Aorta (tissue), 5 donors: ENCODE measurements at regions of chr10 and their contacts with region 1.

Region 1: GRCh38 chr10:110871298-110872084 is at the start of gene PDCD4:
- DNase-seq: peak; percentile 100
- ATAC-seq: peak; percentile 97
- H3K4me3 ChIP-seq: peak within 1 kb of the TSS; percentile 97 to 98
- H3K27ac ChIP-seq: peak within 1 kb of the TSS; percentile 88 to 89
- H3K4me1 ChIP-seq: peaks cover 0 to 7% of the 10 kb centered on the region in 2 donors
- H3K27me3 ChIP-seq: no peaks in the 10 kb centered on the region
- total RNA-seq, gene PDCD4: 67.5 to 124 TPM

Region 2: DNA sequence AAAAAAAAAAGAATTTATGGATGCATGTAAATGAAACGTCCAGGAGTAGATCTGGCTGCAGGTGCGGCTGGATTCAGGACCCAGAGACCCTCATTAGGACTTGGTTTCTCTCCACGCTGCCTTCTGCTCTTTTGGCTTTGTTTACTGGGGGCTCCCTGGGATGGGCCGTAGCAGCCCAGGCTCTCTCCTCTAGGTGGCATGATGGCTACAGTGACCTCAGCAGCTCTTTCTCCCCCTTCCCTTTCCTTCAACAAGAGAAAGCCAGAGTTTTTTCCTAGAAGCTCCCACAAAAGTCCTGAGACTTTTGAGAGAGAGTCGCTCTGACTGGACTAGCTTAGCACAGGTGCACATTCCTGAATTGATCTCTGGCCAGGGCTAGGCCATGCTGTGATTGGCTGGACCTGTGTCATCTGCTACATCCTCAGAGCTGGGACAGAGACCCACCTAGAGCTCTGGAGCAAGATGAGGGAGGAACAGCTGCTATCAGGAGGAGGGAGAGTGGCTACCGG is 67.6 kb before region 1 on chr10:
- intact Hi-C with region 1: loop called in 1 of 2 experiments (anchors 5 kb)
- DNase-seq: peak in 1 of 2 donors; percentile 58
- ATAC-seq: peak; percentile 88
- H3K4me3 ChIP-seq: no peak overlapping the region
- H3K27ac ChIP-seq: peak overlapping the region in 1 of 2 donors; percentile 49
- H3K4me1 ChIP-seq: peaks cover 0 to 3% of the 10 kb centered on the region in 2 donors
- H3K27me3 ChIP-seq: no peaks in the 10 kb centered on the region

Region 3: GRCh38 chr10:110918643-110919363 is 47.3 kb after region 1 on chr10 and contains the start of gene BBIP1:
- intact Hi-C with region 1: loop called in 1 of 2 experiments (anchors 2 kb)
- DNase-seq: no peak
- ATAC-seq: peak; percentile 99
- H3K4me3 ChIP-seq: peak within 1 kb of the TSS; percentile 96 to 98
- H3K27ac ChIP-seq: peak within 1 kb of the TSS; percentile 93 to 98
- H3K4me1 ChIP-seq: peaks cover 0 to 5% of the 10 kb centered on the region in 2 donors
- H3K27me3 ChIP-seq: no peaks in the 10 kb centered on the region
- total RNA-seq, gene BBIP1: 35.3 to 36.2 TPM